Colonic mucosa (tissue), 4 donors: ENCODE measurements at regions of chr2 and their contacts with region 1.

Region 1: DNA sequence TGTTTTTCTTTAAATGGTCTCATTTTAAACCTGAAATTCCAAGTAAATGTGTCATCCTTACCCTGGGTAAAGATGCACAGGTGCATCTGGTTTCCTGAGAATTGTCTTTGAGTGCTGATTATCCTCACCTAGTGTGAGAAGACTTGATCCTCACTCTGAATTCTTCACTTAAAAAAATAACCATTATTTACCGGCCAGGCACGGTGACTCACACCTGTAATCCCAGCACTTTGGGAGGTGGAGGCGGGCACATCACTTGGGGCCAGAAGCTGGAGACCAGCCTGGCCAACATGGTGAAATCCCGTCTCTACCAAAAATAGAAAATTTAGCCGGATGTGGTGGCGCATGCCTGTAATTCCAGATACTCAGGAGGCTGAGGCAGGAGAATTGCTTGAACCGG is 9.9 kb upstream of the WNT6 start:
- DNase-seq: no peak
- H3K4me3 ChIP-seq: no peak overlapping the region
- H3K27ac ChIP-seq: no peak overlapping the region
- H3K4me1 ChIP-seq: no peaks in the 10 kb centered on the region
- H3K27me3 ChIP-seq: peaks cover 7% of the 10 kb centered on the region
- CTCF ChIP-seq: no peak

Region 2: DNA sequence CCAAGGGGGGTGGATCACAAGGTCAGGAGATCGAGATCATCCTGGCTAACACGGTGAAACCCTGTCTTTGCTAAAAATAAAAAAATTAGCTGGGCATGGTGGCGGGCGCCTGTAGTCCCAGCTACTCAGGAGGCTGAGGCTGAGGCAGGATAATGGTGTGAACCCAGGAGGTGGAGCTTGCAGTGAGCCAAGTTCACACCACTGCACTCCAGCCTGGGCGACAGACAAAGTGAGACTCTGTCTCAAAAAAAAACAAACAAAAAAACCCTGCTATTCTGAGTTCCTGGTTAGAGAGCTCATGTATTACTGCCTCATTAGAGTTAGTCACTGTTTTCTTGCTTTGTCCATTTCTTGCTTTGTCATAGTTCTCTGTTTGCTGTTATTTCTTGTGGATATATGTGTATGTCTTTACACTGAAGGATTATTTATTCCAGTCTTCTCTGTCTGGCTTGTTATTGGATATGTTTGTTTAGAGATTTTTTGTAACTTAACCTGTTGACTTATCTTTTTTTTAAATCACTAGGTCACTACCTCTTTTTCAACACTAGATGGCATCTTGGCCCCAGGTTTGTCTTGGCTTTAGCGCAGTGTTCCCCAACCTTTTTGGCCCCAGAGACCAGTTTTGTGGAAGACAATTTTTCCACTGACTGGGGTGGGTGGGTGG is 122.1 kb before region 1 on chr2:
- intact Hi-C with region 1: loop called (anchors 2 kb)
- DNase-seq: no peak
- H3K4me3 ChIP-seq: no peak overlapping the region
- H3K27ac ChIP-seq: no peak overlapping the region
- H3K4me1 ChIP-seq: peaks cover 7% of the 10 kb centered on the region
- H3K27me3 ChIP-seq: no peaks in the 10 kb centered on the region
- CTCF ChIP-seq: peak; percentile 27